GM10248 (cell line): ENCODE measurements at regions of chr15 and their contacts with region 1.

Region 1: DNA sequence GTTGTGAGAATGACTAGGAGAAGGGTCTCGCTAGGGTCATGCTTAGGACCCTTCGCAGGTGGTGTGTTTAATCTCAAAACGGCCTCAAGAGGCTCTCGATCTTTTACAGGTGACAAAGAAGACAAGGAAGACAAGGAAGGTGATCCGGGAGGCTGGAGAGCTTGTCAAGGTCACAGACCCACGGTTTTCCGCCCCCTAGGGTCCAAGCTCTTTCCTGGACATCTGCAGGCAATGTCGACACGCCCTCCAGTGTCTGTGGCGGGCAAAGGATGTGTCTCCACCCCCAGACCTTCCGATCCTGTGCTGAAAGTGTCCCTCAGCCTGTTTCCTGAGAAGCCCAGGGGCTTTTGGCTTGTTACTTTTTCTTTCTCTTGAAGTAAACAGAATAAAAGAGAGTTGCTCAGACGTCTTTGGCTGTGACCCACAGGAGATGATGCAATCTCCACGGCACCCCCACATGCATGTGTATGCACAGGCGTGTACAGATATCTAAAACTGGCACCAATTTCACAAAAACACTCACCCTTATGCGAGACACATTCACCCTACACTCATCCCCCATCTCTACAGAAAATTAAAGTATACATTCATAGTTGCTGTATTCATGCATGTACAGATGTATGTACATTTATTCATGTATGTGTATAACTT is 108.8 kb downstream of the KLF13 start:
- DNase-seq: peak; percentile 84
- CTCF ChIP-seq: peak; percentile 91

Region 2: DNA sequence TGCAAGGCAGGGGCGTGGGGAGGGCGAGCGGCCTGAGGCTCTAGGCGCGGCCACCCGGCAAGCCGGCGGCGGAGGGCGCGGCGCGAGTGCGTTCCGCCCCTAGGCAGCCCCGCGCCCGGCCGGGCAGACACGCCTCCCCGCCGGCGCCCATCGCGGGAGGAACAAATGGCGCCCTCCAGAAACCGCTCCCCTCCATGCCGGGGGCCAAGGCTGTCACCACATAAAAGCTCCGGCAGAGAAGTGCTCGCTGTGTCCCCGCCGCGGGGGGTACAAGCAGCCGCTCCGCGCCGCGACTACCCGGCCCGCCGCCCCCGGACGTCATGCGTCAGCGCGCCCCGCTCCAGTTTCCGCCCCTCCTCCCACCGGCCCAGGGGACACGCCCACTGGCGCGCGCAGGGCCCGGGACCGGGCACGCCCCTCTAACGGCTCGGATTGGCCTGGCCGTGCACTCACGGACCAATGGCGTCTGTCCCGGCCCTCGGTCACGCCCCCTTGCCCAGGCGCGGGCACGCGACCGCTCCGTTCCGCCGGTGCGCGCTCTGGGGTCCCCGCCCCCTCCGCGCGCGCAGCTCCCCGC is 109.1 kb before region 1 on chr15:
- CTCF ChIA-PET with region 1: interaction called, 14 read pairs
- POLR2A ChIA-PET with region 1: no interaction called
- DNase-seq: peak; percentile 98
- CTCF ChIP-seq: no peak

Region 3: DNA sequence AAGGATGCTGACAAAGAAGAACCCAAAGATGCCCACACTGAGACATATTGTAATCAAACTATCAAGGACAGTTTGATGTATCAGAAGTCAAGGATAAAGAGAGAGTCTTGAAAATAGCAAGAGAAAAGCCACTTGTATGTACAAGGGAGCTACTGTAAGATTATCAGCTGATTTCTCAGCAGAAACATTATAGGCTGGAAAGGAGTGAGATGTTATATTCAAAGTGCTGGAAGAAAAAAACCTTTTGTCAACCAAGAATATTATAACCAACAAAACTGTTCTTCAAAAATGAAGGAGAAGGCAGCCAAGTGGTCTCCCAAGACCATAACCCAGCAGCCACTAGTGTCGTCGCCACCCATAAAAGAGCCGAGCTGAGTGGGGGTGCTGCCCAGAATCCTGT is 15.6 kb before region 1 on chr15:
- CTCF ChIA-PET with region 1: interaction called, 30 read pairs
- POLR2A ChIA-PET with region 1: no interaction called
- DNase-seq: no peak
- CTCF ChIP-seq: no peak